ENCODE measurements at regions of chr21 and their contacts with region 1.

Region 1: GRCh38 chr21:33924079-33924765 is 8.6 kb upstream of the ATP5PO start:
- DNase-seq: peak; percentile 75
- ATAC-seq: peak; percentile 99
- H3K4me3 Mint-ChIP-seq: peak overlapping the region; percentile 33
- H3K27ac Mint-ChIP-seq: no peak overlapping the region
- H3K4me1 Mint-ChIP-seq: peaks cover 6% of the 10 kb centered on the region
- H3K27me3 Mint-ChIP-seq: no peaks in the 10 kb centered on the region
- CTCF ChIP-seq: peak; percentile 88

Region 2: GRCh38 chr21:33619726-33620125 is 304.5 kb before region 1 on chr21:
- CTCF ChIA-PET with region 1: no interaction called
- POLR2A ChIA-PET with region 1: no interaction called
- intact Hi-C with region 1: no loop called
- DNase-seq: no peak
- ATAC-seq: no peak
- H3K4me3 Mint-ChIP-seq: no peak overlapping the region
- H3K27ac Mint-ChIP-seq: no peak overlapping the region
- H3K4me1 Mint-ChIP-seq: peaks cover 1% of the 10 kb centered on the region
- H3K27me3 Mint-ChIP-seq: no peaks in the 10 kb centered on the region
- CTCF ChIP-seq: no peak

Region 3: GRCh38 chr21:33947451-33948095 is 23.4 kb after region 1 on chr21:
- CTCF ChIA-PET with region 1: interaction called, 11 read pairs
- POLR2A ChIA-PET with region 1: interaction called, 4 read pairs
- intact Hi-C with region 1: no loop called
- DNase-seq: peak; percentile 36
- ATAC-seq: peak; percentile 74
- H3K4me3 Mint-ChIP-seq: peak overlapping the region; percentile 75
- H3K27ac Mint-ChIP-seq: peak overlapping the region; percentile 92
- H3K4me1 Mint-ChIP-seq: peaks cover 55% of the 10 kb centered on the region
- H3K27me3 Mint-ChIP-seq: no peaks in the 10 kb centered on the region
- CTCF ChIP-seq: no peak

Region 4: GRCh38 chr21:34020005-34020847 is 96.0 kb after region 1 on chr21:
- CTCF ChIA-PET with region 1: interaction called, 15 read pairs
- POLR2A ChIA-PET with region 1: interaction called, 5 read pairs
- intact Hi-C with region 1: loop called (anchors 1 kb)
- DNase-seq: peak; percentile 45
- ATAC-seq: peak; percentile 69
- H3K4me3 Mint-ChIP-seq: peak overlapping the region; percentile 75
- H3K27ac Mint-ChIP-seq: peak overlapping the region; percentile 96
- H3K4me1 Mint-ChIP-seq: no peaks in the 10 kb centered on the region
- H3K27me3 Mint-ChIP-seq: no peaks in the 10 kb centered on the region
- CTCF ChIP-seq: no peak

Region 5: DNA sequence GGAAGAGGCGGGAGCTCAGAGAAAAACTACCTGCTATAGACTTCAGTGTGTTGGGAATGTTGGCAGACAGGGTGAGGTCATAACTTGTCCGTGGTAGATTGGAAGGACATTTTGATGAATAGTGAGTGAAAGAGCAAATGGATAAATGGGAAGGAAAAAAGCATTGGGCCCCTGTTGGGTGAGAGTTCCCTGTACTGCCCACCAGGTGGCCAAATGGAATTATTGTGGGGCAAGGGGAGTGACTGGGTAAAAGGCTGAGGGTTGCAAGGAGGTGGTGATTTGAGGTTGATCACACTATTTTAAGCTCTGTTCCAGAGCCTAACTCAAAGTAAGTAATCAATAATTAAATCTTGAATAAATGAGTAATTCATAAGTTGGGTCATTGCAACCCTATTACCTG is 209.6 kb after region 1 on chr21:
- CTCF ChIA-PET with region 1: interaction called, 8 read pairs
- POLR2A ChIA-PET with region 1: no interaction called
- intact Hi-C with region 1: loop called (anchors 1 kb)
- DNase-seq: no peak
- ATAC-seq: no peak
- H3K4me3 Mint-ChIP-seq: no peak overlapping the region
- H3K27ac Mint-ChIP-seq: no peak overlapping the region
- H3K4me1 Mint-ChIP-seq: peaks cover 40% of the 10 kb centered on the region
- H3K27me3 Mint-ChIP-seq: no peaks in the 10 kb centered on the region
- CTCF ChIP-seq: no peak

Region 6: DNA sequence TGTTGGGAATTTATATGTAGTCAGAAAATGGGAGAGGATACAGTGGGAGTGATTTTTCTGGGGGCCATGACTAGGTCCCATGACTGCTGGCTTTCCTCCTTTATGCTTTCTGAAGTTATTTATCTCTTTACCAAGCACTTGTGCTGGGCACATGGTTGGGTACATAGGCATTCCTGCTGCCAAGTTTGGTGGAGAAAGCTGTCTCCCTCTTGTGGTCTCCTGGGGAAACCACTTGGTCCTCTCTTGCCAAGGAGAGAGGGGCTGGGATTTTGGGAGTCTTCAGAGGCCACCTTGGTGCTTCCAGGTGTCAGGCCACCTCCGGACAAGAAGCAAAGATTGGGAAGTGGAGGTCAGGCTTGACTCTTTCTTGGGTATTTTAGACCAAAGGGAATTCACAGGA is 319.3 kb after region 1 on chr21:
- CTCF ChIA-PET with region 1: interaction called, 8 read pairs
- POLR2A ChIA-PET with region 1: no interaction called
- intact Hi-C with region 1: loop called (anchors 1 kb)
- DNase-seq: no peak
- ATAC-seq: no peak
- H3K4me3 Mint-ChIP-seq: no peak overlapping the region
- H3K27ac Mint-ChIP-seq: no peak overlapping the region
- H3K4me1 Mint-ChIP-seq: no peaks in the 10 kb centered on the region
- H3K27me3 Mint-ChIP-seq: peaks cover 4% of the 10 kb centered on the region
- CTCF ChIP-seq: no peak

Region 7: GRCh38 chr21:34362136-34362444 is 437.9 kb after region 1 on chr21:
- CTCF ChIA-PET with region 1: interaction called, 14 read pairs
- POLR2A ChIA-PET with region 1: no interaction called
- intact Hi-C with region 1: no loop called
- DNase-seq: no peak
- ATAC-seq: peak; percentile 15
- H3K4me3 Mint-ChIP-seq: no peak overlapping the region
- H3K27ac Mint-ChIP-seq: no peak overlapping the region
- H3K4me1 Mint-ChIP-seq: peaks cover 7% of the 10 kb centered on the region
- H3K27me3 Mint-ChIP-seq: peaks cover 14% of the 10 kb centered on the region
- CTCF ChIP-seq: no peak

Measured in activated B cell treated with CpG ODN at 0.5 μM for 24 hours (primary cell).